Activated T-helper 1 cell treated with anti-CD3 and anti-CD28 coated beads, Interleukin-12 subunit alpha, Interleukin-12 subunit beta, Interleukin-2, Interleukin-4 antibody, amounts not matched to agents 30 ng/mL and 10 ng/mL and 1 ng/mL, durations not matched to agents 14 hours and 24 hours and 36 hours (primary cell): ENCODE measurements at regions of chr12 and their contacts with region 1.

Region 1: GRCh38 chr12:54984658-54985376 is at the start of gene TESPA1:
- DNase-seq: peak; percentile 82
- H3K4me3 Mint-ChIP-seq: peak within 1 kb of the TSS; percentile 90
- H3K27ac Mint-ChIP-seq: peak within 1 kb of the TSS; percentile 90
- H3K4me1 Mint-ChIP-seq: peaks cover 79% of the 10 kb centered on the region
- H3K27me3 Mint-ChIP-seq: no peaks in the 10 kb centered on the region
- total RNA-seq, gene TESPA1: 179 and 181 TPM in 2 replicates

Region 2: DNA sequence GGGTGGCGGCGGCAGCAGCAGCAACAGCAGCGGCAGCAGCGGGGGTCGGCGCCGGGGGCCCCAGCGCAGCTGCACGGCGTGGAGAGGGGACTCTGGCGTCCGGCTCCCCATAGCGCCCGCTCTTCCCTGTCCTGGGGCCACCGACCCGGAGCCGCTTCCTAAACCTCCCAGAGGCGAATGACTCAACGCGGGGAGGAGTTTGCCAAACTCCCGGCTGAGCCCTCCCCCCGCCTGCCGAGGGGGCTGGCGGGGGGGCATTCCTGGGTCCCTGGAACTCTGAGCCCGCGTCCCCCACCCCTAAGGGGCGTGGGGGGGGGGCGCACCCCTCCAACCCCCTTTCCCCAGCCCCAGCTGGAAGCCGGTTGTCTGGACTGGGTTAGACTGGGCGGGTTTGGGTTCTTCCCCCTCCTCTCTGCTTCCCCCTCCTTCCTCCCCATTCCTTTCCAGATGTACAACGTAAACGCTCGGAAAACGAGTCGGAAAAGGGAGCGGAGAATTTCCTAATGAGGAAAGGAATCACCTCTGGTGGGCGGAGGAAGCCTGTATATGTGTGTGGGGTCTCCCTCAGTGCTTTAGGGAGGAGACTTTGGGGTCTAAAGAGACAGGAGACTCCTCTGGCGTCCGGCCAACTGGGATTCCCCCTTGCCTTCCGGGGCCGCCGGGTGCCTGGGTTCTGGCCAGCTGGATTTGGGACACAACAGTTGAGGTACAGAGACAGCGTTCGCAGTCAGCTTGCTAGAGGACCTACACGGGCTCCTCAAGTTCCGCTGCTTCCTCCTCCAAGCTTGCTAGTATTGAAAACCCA is 565.5 kb before region 1 on chr12 and contains the start of gene ITGA5:
- intact Hi-C with region 1: loop called (anchors 10 kb)
- DNase-seq: no peak
- H3K4me3 Mint-ChIP-seq: peak within 1 kb of the TSS; percentile 80
- H3K27ac Mint-ChIP-seq: peak within 1 kb of the TSS; percentile 86
- H3K4me1 Mint-ChIP-seq: peaks cover 52% of the 10 kb centered on the region
- H3K27me3 Mint-ChIP-seq: peaks cover 16% of the 10 kb centered on the region
- total RNA-seq, gene ITGA5: 31.2 and 31.6 TPM in 2 replicates

Region 3: GRCh38 chr12:54549774-54550451 is 434.9 kb before region 1 on chr12:
- intact Hi-C with region 1: loop called (anchors 1 kb)
- DNase-seq: peak; percentile 1
- H3K4me3 Mint-ChIP-seq: peak overlapping the region; percentile 84
- H3K27ac Mint-ChIP-seq: no peak overlapping the region
- H3K4me1 Mint-ChIP-seq: peaks cover 48% of the 10 kb centered on the region
- H3K27me3 Mint-ChIP-seq: peaks cover 7% of the 10 kb centered on the region

Region 4: GRCh38 chr12:54853995-54854566 is 130.7 kb before region 1 on chr12 and contains the start of gene MUCL1:
- intact Hi-C with region 1: loop called (anchors 1 kb)
- DNase-seq: peak; percentile 66
- H3K4me3 Mint-ChIP-seq: no peak within 1 kb of the TSS
- H3K27ac Mint-ChIP-seq: no peak within 1 kb of the TSS
- H3K4me1 Mint-ChIP-seq: peaks cover 15% of the 10 kb centered on the region
- H3K27me3 Mint-ChIP-seq: peaks cover 1% of the 10 kb centered on the region
- total RNA-seq, gene MUCL1: not detected in 2 replicates

Region 5: GRCh38 chr12:55619354-55620138 is 634.7 kb after region 1 on chr12:
- intact Hi-C with region 1: loop called (anchors 5 kb)
- DNase-seq: peak; percentile 31
- H3K4me3 Mint-ChIP-seq: no peak overlapping the region
- H3K27ac Mint-ChIP-seq: no peak overlapping the region
- H3K4me1 Mint-ChIP-seq: no peaks in the 10 kb centered on the region
- H3K27me3 Mint-ChIP-seq: peaks cover 2% of the 10 kb centered on the region